ENCODE measurements at regions of chr12 and their contacts with region 1.

Region 1: GRCh38 chr12:48851883-48852733 is at the start of gene DDX23:
- DNase-seq: peak; percentile 79 to 97
- ATAC-seq: peak; percentile 88 to 97 (median 93)
- H3K4me3 ChIP-seq: peak within 1 kb of the TSS; percentile 92
- H3K4me3 Mint-ChIP-seq: peak within 1 kb of the TSS; percentile 100
- H3K27ac ChIP-seq: peak within 1 kb of the TSS; percentile 92
- H3K27ac Mint-ChIP-seq: peak within 1 kb of the TSS; percentile 99 to 100
- H3K4me1 ChIP-seq: peaks cover 20% of the 10 kb centered on the region
- H3K4me1 Mint-ChIP-seq: peaks cover 42 to 46% of the 10 kb centered on the region in 2 donors
- H3K27me3 ChIP-seq: no peaks in the 10 kb centered on the region
- H3K27me3 Mint-ChIP-seq: no peaks in the 10 kb centered on the region
- CTCF ChIP-seq: no peak
- total RNA-seq, gene DDX23: 96.0 to 123 (median 104) TPM

Region 2: GRCh38 chr12:48865434-48866290 is 13.6 kb after region 1 on chr12 and contains the start of gene RND1:
- intact Hi-C with region 1: loop called (anchors 2 kb)
- DNase-seq: peak; percentile 70 to 95
- ATAC-seq: peak; percentile 94 to 97 (median 95)
- H3K4me3 ChIP-seq: peak within 1 kb of the TSS; percentile 60
- H3K4me3 Mint-ChIP-seq: peak within 1 kb of the TSS; percentile 96
- H3K27ac ChIP-seq: peak within 1 kb of the TSS; percentile 39
- H3K27ac Mint-ChIP-seq: peak within 1 kb of the TSS; percentile 80
- H3K4me1 ChIP-seq: peaks cover 24% of the 10 kb centered on the region
- H3K4me1 Mint-ChIP-seq: peaks cover 17 to 24% of the 10 kb centered on the region in 2 donors
- H3K27me3 ChIP-seq: peaks cover 22% of the 10 kb centered on the region
- H3K27me3 Mint-ChIP-seq: peaks cover 32 to 45% of the 10 kb centered on the region in 2 donors
- CTCF ChIP-seq: no peak
- total RNA-seq, gene RND1: 1.7 to 6.8 (median 5.6) TPM

Region 3: GRCh38 chr12:48890657-48891418 is 38.7 kb after region 1 on chr12:
- intact Hi-C with region 1: loop called (anchors 1 kb)
- DNase-seq: peak; percentile 70 to 86
- ATAC-seq: peak; percentile 83 to 99 (median 98)
- H3K4me3 ChIP-seq: no peak overlapping the region
- H3K4me3 Mint-ChIP-seq: no peak overlapping the region
- H3K27ac ChIP-seq: no peak overlapping the region
- H3K27ac Mint-ChIP-seq: no peak overlapping the region
- H3K4me1 ChIP-seq: peaks cover 9% of the 10 kb centered on the region
- H3K4me1 Mint-ChIP-seq: peaks cover 0 to 5% of the 10 kb centered on the region in 2 donors
- H3K27me3 ChIP-seq: peaks cover 11% of the 10 kb centered on the region
- H3K27me3 Mint-ChIP-seq: peaks cover 7 to 18% of the 10 kb centered on the region in 2 donors
- CTCF ChIP-seq: peak; percentile 90

Region 4: GRCh38 chr12:48977315-48978281 is 125.5 kb after region 1 on chr12:
- intact Hi-C with region 1: loop called (anchors 2 kb)
- DNase-seq: peak; percentile 87 to 92
- ATAC-seq: peak; percentile 59 to 75 (median 68)
- H3K4me3 ChIP-seq: no peak overlapping the region
- H3K4me3 Mint-ChIP-seq: peak overlapping the region; percentile 64
- H3K27ac ChIP-seq: no peak overlapping the region
- H3K27ac Mint-ChIP-seq: peak overlapping the region; percentile 49 to 94
- H3K4me1 ChIP-seq: peaks cover 61% of the 10 kb centered on the region
- H3K4me1 Mint-ChIP-seq: peaks cover 56 to 63% of the 10 kb centered on the region in 2 donors
- H3K27me3 ChIP-seq: peaks cover 33% of the 10 kb centered on the region
- H3K27me3 Mint-ChIP-seq: peaks cover 20 to 38% of the 10 kb centered on the region in 2 donors
- CTCF ChIP-seq: peak; percentile 98

Region 5: DNA sequence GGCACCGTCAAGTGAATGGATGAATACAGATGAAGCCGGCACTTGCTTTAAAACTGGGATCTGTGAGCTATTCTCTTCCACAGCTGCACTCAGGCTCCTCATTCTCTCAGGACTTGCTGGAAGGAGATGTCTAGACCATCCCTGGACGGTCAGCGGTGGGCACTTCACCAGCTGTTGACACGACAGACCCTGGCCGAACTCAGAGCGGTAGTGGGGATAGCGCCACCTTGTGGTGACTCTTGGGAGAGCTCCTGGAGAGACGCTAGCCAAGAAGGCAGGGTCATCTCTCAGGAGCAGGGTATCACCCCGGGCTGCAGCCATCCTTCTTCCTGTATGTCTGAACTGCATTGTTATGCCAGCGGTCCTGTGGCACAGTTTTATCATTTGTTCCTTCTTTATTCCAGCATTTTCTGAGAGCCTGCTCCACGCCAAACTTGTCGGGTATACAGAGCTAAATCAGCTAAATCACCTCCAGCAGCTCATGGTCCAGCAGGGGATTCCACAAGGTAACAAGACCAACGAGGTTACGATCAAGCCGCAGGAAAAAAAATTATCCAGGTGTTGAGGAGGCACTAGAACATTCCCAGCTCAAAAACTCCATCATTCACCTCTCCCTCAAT is 136.0 kb after region 1 on chr12:
- intact Hi-C with region 1: loop called (anchors 1 kb)
- DNase-seq: peak; percentile 77 to 86
- ATAC-seq: peak; percentile 86 to 97 (median 90)
- H3K4me3 ChIP-seq: no peak overlapping the region
- H3K4me3 Mint-ChIP-seq: no peak overlapping the region
- H3K27ac ChIP-seq: no peak overlapping the region
- H3K27ac Mint-ChIP-seq: no peak overlapping the region
- H3K4me1 ChIP-seq: peaks cover 5% of the 10 kb centered on the region
- H3K4me1 Mint-ChIP-seq: peaks cover 5 to 8% of the 10 kb centered on the region in 2 donors
- H3K27me3 ChIP-seq: peaks cover 7% of the 10 kb centered on the region
- H3K27me3 Mint-ChIP-seq: peaks cover 35% of the 10 kb centered on the region in 2 donors
- CTCF ChIP-seq: peak; percentile 87

Measured in natural killer cell (primary cell).